Activated CD4-positive, alpha-beta T cell treated with anti-CD3 and anti-CD28 coated beads, Interleukin-2, amount 10 ng/mL, durations not matched to agents 24 days and 14 days (primary cell): ENCODE measurements at regions of chr1 and their contacts with region 1.

Region 1: GRCh38 chr1:222814536-222815439 is at the start of gene DISP1:
- DNase-seq: peak; percentile 91
- H3K4me3 Mint-ChIP-seq: peak within 1 kb of the TSS; percentile 95
- H3K27ac Mint-ChIP-seq: peak within 1 kb of the TSS; percentile 95
- H3K4me1 Mint-ChIP-seq: peaks cover 17% of the 10 kb centered on the region
- H3K27me3 Mint-ChIP-seq: peaks cover 9% of the 10 kb centered on the region
- total RNA-seq, gene DISP1: 1.3 and 2.0 TPM in 2 replicates

Region 2: DNA sequence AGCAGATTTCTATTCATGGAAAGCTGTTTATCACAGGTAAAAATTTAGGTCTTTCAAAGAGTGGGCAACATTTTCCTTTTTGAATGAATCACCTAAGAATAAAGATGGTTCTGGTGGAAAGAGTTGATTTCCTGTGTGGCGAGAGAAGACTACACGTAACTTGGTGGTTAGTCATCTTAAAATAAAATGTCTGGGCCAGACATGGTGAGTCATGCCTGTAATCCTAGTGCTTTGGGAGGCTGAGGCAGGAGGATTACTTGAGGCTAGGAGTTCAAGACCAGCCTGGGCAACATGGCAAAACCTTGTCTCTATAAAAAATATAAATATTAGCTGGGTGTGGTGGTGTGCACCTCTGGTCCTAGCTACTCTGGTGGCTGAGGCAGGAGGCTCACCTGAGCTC is 65.8 kb after region 1 on chr1:
- intact Hi-C with region 1: loop called (anchors 5 kb)
- DNase-seq: no peak
- H3K4me3 Mint-ChIP-seq: no peak overlapping the region
- H3K27ac Mint-ChIP-seq: peak overlapping the region; percentile 29
- H3K4me1 Mint-ChIP-seq: peaks cover 4% of the 10 kb centered on the region
- H3K27me3 Mint-ChIP-seq: no peaks in the 10 kb centered on the region

Region 3: DNA sequence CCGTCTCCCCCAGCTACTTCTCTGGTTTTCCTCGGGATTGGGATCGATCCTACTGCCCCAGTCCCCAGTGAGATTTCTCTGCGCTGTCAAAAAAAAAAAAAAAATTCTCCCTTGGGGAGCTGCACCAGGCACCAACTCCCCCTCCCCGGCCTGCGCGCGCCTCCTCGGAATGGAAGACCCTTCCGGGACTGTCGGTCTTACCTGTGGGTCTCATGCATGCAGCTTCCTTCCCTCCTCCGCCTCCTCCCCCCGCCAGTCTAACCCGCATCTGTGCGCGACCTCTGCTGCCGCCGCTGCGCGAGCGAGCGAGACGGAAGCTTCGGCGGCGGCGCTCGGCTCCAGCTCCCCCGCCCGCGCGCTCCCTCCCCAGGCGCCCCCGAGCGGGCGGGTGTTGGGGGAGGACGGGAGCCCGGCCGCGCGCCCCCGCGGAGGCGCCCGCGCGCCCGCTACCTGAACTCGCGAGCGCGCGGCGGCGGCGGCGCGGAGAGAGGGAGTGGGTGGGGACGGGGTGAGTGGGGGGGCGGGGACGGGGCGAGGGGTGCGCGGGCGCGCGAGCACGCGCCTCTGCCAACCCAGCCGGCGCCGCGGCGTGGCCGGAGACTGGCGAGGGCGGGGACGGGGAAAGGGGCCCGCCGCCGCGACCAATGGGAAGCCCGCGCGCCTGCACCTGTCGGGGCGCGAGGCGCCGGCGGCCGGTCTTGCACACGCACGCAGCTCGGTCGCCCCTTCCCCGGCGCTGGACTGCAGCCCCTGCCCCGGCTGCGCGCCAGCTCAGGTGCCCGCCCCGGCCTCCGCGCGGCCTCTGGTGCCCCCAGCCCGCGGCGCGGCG is 549.3 kb after region 1 on chr1 and contains the start of gene SUSD4:
- intact Hi-C with region 1: loop called (anchors 10 kb)
- DNase-seq: peak; percentile 83
- H3K4me3 Mint-ChIP-seq: peak within 1 kb of the TSS; percentile 85
- H3K27ac Mint-ChIP-seq: no peak within 1 kb of the TSS
- H3K4me1 Mint-ChIP-seq: peaks cover 4% of the 10 kb centered on the region
- H3K27me3 Mint-ChIP-seq: peaks cover 56% of the 10 kb centered on the region
- total RNA-seq, gene SUSD4: not detected in 2 replicates